ENCODE measurements at regions of chr1 and their contacts with region 1.

Region 1: GRCh38 chr1:47997289-47998200 is at the start of gene TRABD2B:
- DNase-seq: peak; percentile 91
- ATAC-seq: peak; percentile 72
- H3K4me3 Mint-ChIP-seq: peak within 1 kb of the TSS; percentile 88
- H3K27ac Mint-ChIP-seq: peak within 1 kb of the TSS; percentile 50
- H3K4me1 Mint-ChIP-seq: peaks cover 58% of the 10 kb centered on the region
- H3K27me3 Mint-ChIP-seq: peaks cover 32% of the 10 kb centered on the region
- CTCF ChIP-seq: peak; percentile 96
- total RNA-seq, gene TRABD2B: 7.8 to 10.8 TPM (median 10.3 TPM) in 3 replicates

Region 2: DNA sequence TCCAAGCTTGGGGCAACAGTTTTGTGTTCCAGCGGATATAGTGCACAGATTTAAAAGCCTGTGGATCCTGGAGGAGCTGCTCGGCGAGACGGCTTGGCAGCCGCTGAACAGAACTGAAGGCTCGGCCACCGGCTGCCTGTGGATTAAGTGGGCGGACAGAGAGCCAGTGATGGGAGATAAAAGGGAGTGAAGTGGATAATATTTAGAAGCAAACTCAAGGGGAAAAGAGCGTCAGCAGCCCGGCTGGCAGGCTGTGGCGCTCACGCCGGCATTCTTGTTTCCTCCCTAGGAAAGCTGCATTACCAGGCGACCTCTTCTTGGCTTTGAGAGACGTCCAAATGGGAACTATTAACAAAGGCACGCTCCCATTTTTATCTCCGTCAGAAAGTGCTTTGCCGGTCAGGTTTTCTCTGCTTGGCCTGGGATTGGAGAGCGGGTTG is 10.8 kb before region 1 on chr1:
- CTCF ChIA-PET with region 1: interaction called, 22 read pairs
- POLR2A ChIA-PET with region 1: interaction called, 4 read pairs
- DNase-seq: no peak
- ATAC-seq: no peak
- H3K4me3 Mint-ChIP-seq: peak overlapping the region; percentile 15
- H3K27ac Mint-ChIP-seq: peak overlapping the region; percentile 74
- H3K4me1 Mint-ChIP-seq: peaks cover 70% of the 10 kb centered on the region
- H3K27me3 Mint-ChIP-seq: peaks cover 4% of the 10 kb centered on the region; the same call in 1 of the 2 replicates
- CTCF ChIP-seq: no peak

Region 3: GRCh38 chr1:48026275-48026674 is 28.7 kb after region 1 on chr1:
- CTCF ChIA-PET with region 1: interaction called, 20 read pairs
- POLR2A ChIA-PET with region 1: no interaction called
- DNase-seq: no peak
- ATAC-seq: no peak
- H3K4me3 Mint-ChIP-seq: no peak overlapping the region
- H3K27ac Mint-ChIP-seq: no peak overlapping the region
- H3K4me1 Mint-ChIP-seq: peaks cover 67% of the 10 kb centered on the region
- H3K27me3 Mint-ChIP-seq: peaks cover 26% of the 10 kb centered on the region
- CTCF ChIP-seq: no peak

Region 4: DNA sequence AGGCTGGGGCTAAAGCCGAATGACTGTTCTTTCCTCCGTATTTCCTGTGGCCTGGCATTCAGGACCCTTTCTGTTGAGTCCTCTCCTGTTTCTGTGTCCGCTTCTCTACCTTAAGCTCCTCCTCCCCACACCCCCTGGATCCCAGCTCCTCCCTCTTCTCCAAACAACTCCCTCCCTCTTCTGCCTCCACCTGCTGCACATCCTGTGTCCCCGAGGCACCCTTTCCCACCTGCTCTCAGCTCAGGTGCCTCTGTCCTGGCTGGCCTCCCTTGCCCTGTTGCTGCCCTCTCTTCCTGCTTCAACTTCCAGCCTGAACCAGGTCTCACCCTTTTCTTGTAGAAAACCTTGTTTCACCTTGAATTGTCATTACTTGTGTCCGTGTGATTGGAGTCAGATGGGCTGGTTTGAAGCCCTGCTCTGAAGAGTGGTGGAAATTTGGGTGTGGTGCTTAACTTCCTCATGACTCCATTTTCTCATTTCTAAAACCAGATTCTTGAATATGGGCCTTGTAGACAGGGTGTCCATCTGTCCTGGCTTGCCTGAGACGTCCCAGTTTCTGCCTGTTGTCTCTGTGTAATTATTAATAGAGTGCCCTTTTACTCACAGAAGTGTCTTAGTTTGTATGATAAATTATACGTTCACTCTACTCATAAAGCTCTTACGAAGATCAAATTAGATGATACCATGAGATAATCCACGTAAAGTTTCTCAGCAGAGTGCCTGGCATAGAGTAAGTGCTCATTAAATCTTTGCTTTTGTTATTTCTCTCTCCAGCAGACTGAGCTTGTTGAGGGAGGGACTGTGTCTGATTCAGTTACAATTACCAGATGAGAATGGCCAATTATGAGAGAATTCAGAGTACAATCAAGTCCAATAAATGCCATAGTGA is 58.6 kb after region 1 on chr1:
- CTCF ChIA-PET with region 1: interaction called, 78 read pairs
- POLR2A ChIA-PET with region 1: interaction called, 3 read pairs
- DNase-seq: peak; percentile 70
- ATAC-seq: peak; percentile 99
- H3K4me3 Mint-ChIP-seq: no peak overlapping the region; the same call in 1 of the 2 replicates
- H3K27ac Mint-ChIP-seq: no peak overlapping the region
- H3K4me1 Mint-ChIP-seq: peaks cover 26% of the 10 kb centered on the region
- H3K27me3 Mint-ChIP-seq: peaks cover 64% of the 10 kb centered on the region
- CTCF ChIP-seq: no peak

Region 5: DNA sequence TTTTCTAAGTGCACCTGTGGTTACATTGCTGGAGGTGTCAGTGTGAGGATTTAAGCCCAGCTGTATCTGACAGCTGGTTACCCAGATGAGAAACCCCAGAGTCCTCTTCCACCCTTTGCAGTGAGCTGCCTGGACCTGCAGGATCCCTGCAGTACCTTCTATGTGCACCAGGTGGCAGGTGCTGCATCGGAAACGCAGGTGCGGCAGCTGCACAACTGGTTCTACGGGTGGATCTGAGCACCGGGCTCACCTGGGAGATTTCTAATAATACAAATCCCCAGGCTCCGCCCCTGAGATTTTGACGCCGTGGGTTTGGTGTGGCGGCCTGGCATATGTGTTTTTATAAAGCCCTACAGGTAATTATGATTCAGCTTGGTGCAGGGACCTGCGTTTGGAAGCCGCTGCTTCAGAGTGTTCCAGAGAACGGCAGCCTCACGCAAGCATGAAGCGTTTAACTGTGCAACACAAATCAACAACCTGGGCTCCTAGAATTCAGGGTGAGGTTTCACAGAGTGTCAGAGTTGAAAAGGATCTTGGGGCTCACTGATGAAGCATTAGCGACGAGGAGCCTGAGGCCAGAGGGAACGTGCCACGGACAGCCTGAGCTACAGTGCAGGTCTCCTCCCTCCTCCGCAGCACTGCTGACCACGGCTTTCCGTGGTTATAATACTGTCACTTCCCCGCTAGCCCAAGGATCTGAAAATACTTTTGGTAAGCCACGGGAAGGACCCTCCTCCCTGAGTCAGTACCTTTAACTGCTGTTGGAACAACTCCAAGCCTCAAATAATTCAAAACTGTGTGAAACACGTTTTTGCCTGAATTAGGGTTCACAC is 96.4 kb after region 1 on chr1:
- CTCF ChIA-PET with region 1: interaction called, 13 read pairs
- POLR2A ChIA-PET with region 1: no interaction called
- DNase-seq: peak; percentile 91
- ATAC-seq: peak; percentile 97
- H3K4me3 Mint-ChIP-seq: peak overlapping the region; percentile 40
- H3K27ac Mint-ChIP-seq: no peak overlapping the region
- H3K4me1 Mint-ChIP-seq: peaks cover 4% of the 10 kb centered on the region
- H3K27me3 Mint-ChIP-seq: peaks cover 54% of the 10 kb centered on the region
- CTCF ChIP-seq: peak; percentile 82